ENCODE measurements at regions of chr10 and their contacts with region 1.

Region 1: DNA sequence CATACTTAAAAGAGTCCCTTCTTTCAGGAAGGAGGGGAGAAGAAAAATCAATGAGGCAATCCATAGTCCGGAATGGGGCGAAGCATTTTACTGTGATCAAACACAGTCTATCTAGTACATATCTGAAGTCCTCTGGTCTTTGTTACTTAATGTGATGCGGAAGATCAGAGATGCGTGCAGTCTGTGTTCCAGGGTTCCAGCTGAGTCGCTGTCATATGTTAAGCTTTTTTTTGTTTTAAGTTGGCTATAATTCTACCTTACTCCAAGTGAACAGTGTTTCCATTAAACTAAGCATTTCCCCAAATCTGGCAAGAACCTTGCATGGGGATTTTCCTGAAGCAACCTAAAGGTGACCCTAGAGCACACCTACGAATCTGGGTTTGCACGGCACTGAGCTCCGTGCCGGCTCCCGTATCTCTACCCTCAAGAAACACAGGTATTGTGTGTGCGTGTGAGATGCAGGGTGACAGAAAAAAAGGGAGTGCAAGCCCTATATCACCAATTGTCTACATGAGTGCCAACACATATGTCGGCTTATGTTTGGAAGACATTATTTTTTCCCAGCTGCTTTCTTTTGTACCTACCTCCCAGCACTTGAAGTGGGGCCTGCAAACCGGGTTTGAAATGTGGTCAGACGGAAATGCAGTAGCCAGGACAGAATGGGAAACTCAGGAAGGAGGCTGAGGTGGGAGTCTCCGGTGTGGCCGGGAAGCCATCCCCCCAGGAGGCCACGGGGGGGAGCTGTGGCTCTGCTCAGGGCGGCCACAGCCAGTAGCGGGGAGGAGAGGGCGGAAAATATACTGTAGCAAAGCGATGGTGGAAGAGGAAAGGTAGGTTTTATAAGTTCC is 435.8 kb upstream of the MGMT start:
- DNase-seq: peak; percentile 68
- H3K4me3 ChIP-seq: no peak overlapping the region
- H3K27ac ChIP-seq: no peak overlapping the region
- H3K4me1 ChIP-seq: peaks cover 18% of the 10 kb centered on the region
- H3K27me3 ChIP-seq: peaks cover 0 to 3% of the 10 kb centered on the region in 2 experiments
- CTCF ChIP-seq: peak; percentile 94 to 96
- POLR2A ChIP-seq: no peak

Region 2: DNA sequence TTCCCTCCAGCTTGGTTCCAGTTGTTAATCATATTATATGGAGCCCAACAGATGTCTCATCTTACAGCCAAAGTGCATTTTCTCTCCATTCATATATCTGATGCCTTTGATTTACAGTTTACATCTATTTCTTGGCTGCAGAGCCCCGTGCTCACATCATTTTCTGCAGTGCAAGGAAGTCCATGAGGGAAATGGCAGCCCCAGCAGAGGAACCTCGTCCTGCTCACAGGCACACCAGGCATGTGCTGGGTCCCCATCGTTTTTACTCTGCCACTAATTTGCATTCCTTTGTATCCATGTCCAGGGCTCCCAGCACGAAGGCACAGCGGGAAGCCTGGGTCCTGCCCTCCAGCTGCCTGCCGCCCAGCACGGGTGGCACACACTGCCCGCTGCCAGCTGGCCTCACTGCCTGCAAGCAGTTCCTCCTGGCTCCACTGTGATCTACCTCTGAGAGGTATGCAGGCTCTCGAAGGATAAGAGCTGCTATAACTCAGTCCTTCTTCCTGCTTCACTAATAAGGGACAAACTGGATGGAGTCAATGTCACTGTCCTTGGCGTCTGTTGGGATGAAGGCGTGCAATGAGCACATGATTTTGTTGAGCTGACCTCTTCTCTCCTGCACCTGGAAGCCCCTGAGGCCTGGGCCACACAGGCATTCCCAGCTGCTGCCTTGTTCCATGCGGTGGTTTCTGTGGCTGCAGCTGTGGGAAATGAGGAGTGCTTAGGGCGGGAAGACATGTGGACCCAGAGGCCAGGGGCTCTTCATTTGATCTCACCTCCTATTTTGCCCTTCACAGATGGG is 147.8 kb before region 1 on chr10:
- CTCF ChIA-PET with region 1: no interaction called
- POLR2A ChIA-PET with region 1: no interaction called
- dilution Hi-C with region 1: no loop called
- intact Hi-C with region 1: no loop called
- DNase-seq: no peak
- H3K4me3 ChIP-seq: no peak overlapping the region
- H3K27ac ChIP-seq: no peak overlapping the region
- H3K4me1 ChIP-seq: no peaks in the 10 kb centered on the region
- H3K27me3 ChIP-seq: no peaks in the 10 kb centered on the region
- CTCF ChIP-seq: no peak
- POLR2A ChIP-seq: no peak

Region 3: DNA sequence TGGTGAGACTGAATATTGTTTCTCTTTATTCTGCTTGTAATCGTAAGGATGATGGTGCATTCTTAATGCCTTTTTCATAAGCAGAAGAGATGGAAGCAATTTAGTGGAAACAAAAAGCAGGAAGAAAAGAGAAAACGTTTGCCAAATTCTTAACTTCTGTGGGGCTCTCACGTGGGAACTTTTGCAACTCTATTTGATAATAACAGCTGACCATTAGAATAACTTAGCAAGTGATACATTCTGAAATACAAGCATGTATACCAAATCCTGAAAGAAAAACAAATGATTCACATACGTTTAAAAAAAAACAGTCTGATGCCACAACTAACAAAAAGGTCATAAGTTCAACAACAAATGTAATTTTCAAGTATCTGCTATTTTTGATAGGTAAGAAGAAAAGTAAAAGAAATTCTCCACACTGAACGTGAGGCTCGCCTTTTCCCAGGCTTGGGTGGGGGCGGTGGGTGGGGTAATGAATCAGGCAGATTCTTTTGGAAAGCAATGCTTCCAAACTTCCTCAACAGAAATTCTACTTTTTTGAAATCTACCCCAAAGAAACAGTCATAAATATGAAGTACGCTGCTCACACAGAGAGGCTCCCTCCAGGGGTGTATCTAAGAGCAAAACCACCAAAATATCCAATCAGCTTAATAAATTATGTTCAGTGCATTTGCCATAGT is 10.4 kb before region 1 on chr10:
- CTCF ChIA-PET with region 1: no interaction called
- POLR2A ChIA-PET with region 1: no interaction called
- dilution Hi-C with region 1: no loop called
- intact Hi-C with region 1: no loop called
- DNase-seq: no peak
- H3K4me3 ChIP-seq: no peak overlapping the region
- H3K27ac ChIP-seq: no peak overlapping the region
- H3K4me1 ChIP-seq: no peaks in the 10 kb centered on the region
- H3K27me3 ChIP-seq: peaks cover 0 to 2% of the 10 kb centered on the region in 2 experiments
- CTCF ChIP-seq: no peak
- POLR2A ChIP-seq: no peak

Region 4: DNA sequence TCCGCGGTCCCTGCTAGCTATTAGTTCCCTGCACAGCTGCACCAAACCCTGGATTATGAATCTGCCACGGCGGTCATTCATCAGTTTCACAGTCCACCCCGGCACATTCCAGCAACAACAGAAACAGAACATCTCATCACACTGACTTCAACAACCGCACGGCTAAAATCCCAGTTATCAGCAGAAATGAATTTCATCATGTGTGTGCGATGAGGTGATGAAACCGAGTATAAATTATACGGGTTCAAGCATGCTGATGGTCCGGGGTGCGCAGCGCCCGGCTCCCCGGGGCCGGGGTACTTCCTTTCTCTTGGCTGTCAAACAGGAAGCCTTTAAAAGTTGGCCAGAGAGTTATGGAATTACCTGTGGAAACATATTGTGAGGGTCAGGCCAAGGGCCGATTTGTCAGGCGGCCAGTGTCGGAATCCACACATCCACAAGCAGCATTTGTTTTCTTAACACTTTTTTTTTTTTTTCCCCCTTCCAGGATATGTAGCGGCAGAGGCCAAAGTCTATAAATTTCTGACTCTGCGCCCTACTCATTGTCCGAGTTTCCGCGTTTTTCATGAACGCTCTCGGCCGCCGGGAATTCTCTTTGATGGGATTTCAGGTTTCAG is 15.0 kb after region 1 on chr10:
- CTCF ChIA-PET with region 1: interaction called, 6 read pairs
- POLR2A ChIA-PET with region 1: interaction called, 3 read pairs
- dilution Hi-C with region 1: no loop called
- intact Hi-C with region 1: loop called (anchors 1 kb)
- DNase-seq: peak; percentile 92
- H3K4me3 ChIP-seq: peak overlapping the region in 2 of 3 experiments; percentile 27 to 71
- H3K27ac ChIP-seq: peak overlapping the region; percentile 100
- H3K4me1 ChIP-seq: peaks cover 61% of the 10 kb centered on the region
- H3K27me3 ChIP-seq: no peaks in the 10 kb centered on the region
- CTCF ChIP-seq: no peak
- POLR2A ChIP-seq: no peak

Region 5: GRCh38 chr10:129332476-129332875 is 301.3 kb after region 1 on chr10:
- CTCF ChIA-PET with region 1: interaction called, 98 read pairs
- POLR2A ChIA-PET with region 1: no interaction called
- dilution Hi-C with region 1: no loop called
- intact Hi-C with region 1: loop called (anchors 1 kb)
- DNase-seq: peak; percentile 62
- H3K4me3 ChIP-seq: no peak overlapping the region
- H3K27ac ChIP-seq: no peak overlapping the region
- H3K4me1 ChIP-seq: peaks cover 13% of the 10 kb centered on the region
- H3K27me3 ChIP-seq: peaks cover 5 to 11% of the 10 kb centered on the region in 2 experiments
- CTCF ChIP-seq: peak; percentile 70 to 72
- POLR2A ChIP-seq: no peak

Region 6: DNA sequence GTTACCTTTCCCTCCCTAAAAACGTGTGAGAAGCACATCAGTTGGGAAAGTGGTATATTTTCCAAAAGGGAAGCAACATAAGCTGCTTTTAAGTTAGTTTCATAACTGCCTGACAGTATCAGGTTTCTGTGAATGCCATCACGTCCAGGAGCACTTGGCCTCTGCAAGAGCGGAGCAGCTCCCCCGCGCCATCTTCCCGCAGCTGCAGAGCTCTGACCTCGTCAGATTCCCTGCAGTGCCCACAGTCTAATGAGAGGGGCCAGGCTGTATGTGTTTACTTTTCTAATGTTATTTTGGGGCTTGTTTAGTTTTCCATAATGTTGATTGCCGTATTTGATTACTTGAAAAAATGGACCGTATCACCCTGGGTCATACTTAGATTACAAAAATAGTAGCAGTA is 510.0 kb after region 1 on chr10:
- CTCF ChIA-PET with region 1: no interaction called
- POLR2A ChIA-PET with region 1: no interaction called
- dilution Hi-C with region 1: no loop called
- intact Hi-C with region 1: loop called (anchors 10 kb)
- DNase-seq: no peak
- H3K4me3 ChIP-seq: no peak overlapping the region
- H3K27ac ChIP-seq: no peak overlapping the region
- H3K4me1 ChIP-seq: no peaks in the 10 kb centered on the region
- H3K27me3 ChIP-seq: no peaks in the 10 kb centered on the region
- CTCF ChIP-seq: no peak
- POLR2A ChIP-seq: no peak

Region 7: DNA sequence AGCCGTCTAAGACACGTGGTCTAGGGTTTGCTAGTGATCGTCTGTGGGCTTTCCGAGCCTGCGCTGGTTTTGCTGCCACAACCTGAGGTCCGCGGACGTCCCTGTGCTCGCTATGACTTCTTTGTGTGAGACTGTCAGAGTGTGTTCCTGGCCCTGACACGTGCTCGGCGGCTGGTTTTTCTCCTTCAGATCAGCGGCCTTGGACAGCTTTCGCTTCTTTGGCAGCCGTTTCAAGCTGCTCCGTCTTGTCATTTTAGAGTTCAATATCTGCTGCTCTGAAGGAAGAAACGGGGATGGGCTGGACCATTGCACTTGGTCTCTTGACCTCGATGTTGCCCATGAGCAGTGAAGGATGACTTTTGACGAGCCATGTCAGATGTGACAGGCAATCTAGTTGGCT is 583.1 kb after region 1 on chr10:
- CTCF ChIA-PET with region 1: no interaction called
- POLR2A ChIA-PET with region 1: no interaction called
- dilution Hi-C with region 1: no loop called
- intact Hi-C with region 1: no loop called
- DNase-seq: no peak
- H3K4me3 ChIP-seq: no peak overlapping the region
- H3K27ac ChIP-seq: no peak overlapping the region
- H3K4me1 ChIP-seq: no peaks in the 10 kb centered on the region
- H3K27me3 ChIP-seq: no peaks in the 10 kb centered on the region
- CTCF ChIP-seq: no peak
- POLR2A ChIP-seq: no peak

Region 8: GRCh38 chr10:129971381-129972144 is 940.3 kb after region 1 on chr10:
- CTCF ChIA-PET with region 1: interaction called, 18 read pairs
- POLR2A ChIA-PET with region 1: no interaction called
- dilution Hi-C with region 1: no loop called
- intact Hi-C with region 1: loop called (anchors 1 kb)
- DNase-seq: peak; percentile 35
- H3K4me3 ChIP-seq: no peak overlapping the region
- H3K27ac ChIP-seq: no peak overlapping the region
- H3K4me1 ChIP-seq: no peaks in the 10 kb centered on the region
- H3K27me3 ChIP-seq: peaks cover 57 to 73% of the 10 kb centered on the region in 2 experiments
- CTCF ChIP-seq: peak; percentile 41 to 50
- POLR2A ChIP-seq: no peak

Measured in endothelial cell of umbilical vein (primary cell).